ENCODE measurements at regions of chr12 and their contacts with region 1.

Region 1: DNA sequence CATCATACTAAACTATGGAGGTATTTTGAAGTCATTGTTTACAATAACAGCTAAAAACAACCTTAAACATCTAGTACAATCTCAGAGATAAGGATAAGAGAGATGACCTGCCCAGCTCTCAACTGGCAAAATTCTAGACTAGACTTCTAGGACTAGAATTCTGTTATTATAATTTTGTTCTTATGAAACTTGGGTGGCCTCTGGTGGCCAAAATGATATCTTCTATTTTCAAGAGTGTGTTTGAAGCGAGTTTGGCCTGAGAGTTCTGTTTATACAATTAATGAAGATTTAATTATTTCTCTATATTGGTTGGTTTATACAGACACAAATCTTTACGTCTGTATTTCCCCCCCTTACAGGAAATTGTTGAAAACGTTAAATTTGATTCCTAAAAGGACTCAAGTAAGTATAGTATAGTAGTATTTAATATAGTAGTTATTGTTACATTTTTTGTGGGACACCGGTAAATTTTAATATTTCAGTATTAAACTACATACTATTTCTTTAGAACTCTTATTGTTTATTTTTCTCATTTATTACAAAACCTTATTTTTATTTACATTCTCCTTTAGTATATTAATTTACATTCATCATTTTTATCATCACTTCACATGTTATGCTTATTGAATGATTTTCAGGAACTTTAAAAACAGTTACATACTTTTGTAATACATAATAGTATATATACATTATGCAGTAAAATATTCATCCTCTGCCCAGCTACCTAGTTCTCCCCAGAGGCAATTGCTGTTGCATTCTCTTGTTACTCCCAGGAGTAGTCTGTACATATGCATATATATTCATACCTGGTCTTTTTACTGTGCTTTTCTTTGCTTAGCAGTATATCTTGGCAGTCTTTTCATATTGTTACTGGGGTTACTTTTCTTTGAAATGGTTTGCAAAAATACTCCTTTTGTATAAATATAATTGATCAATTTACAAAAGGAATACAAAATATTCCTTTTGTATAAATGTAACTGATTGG is 6.6 kb downstream of the PPHLN1 start:
- DNase-seq: peak; percentile 62
- ATAC-seq: peak; percentile 45
- H3K4me3 ChIP-seq: no peak overlapping the region
- H3K4me3 Mint-ChIP-seq: no peak overlapping the region
- H3K27ac ChIP-seq: peak overlapping the region in 1 of 2 donors; percentile 6
- H3K27ac Mint-ChIP-seq: no peak overlapping the region
- H3K4me1 ChIP-seq: peaks cover 20 to 23% of the 10 kb centered on the region in 2 donors
- H3K4me1 Mint-ChIP-seq: peaks cover 57% of the 10 kb centered on the region
- H3K27me3 ChIP-seq: no peaks in the 10 kb centered on the region
- H3K27me3 Mint-ChIP-seq: no peaks in the 10 kb centered on the region
- CTCF ChIP-seq: peak; percentile 79

Region 2: GRCh38 chr12:41264281-41264680 is 1068.3 kb before region 1 on chr12:
- CTCF ChIA-PET with region 1: interaction called, 3 read pairs
- POLR2A ChIA-PET with region 1: no interaction called
- intact Hi-C with region 1: loop called (anchors 5 kb)
- DNase-seq: peak; percentile 8
- ATAC-seq: no peak
- H3K4me3 ChIP-seq: no peak overlapping the region
- H3K4me3 Mint-ChIP-seq: no peak overlapping the region
- H3K27ac ChIP-seq: no peak overlapping the region
- H3K27ac Mint-ChIP-seq: no peak overlapping the region
- H3K4me1 ChIP-seq: no peaks in the 10 kb centered on the region
- H3K4me1 Mint-ChIP-seq: no peaks in the 10 kb centered on the region
- H3K27me3 ChIP-seq: no peaks in the 10 kb centered on the region
- H3K27me3 Mint-ChIP-seq: peaks cover 3% of the 10 kb centered on the region
- CTCF ChIP-seq: peak; percentile 35

Region 3: DNA sequence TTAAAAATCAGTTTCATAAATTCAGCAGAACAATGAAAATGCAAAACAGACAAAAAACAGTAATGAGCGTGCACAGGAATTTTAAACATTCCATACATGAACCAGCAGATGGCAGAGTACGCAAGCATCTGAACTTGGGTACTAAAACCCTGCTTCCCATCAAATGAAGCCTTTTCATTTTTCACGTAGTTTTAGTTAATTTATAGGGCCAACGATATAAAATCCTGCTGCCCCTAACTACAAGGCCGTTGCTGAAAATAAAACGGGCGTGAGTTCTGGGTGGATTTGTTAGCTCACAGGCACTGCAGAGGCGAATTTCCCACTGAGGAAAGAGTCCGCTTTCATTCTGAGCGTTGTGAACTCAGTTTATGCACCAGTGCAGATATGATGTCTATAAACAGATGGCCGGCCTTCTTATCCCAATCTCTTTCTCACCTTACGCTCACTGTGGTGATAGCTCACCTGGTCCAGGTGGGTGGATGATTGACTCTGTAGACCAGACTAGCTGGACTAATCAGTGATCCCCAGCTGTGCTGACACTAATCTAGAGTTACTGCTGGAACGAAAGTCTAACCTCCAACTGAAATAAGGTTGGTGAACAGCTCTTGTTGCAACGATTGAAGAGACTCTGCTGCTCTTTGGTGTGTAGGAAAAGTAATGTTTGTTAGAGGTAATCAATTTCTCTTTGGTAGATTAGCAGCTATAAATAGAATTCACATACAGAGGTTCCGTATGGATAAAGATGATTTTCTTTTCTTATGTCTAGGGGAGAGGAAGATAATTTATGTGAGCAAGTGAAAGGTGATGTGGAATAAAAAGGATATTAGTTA is 1055.3 kb before region 1 on chr12:
- CTCF ChIA-PET with region 1: interaction called, 3 read pairs
- POLR2A ChIA-PET with region 1: no interaction called
- intact Hi-C with region 1: loop called (anchors 1 kb)
- DNase-seq: peak; percentile 44
- ATAC-seq: no peak
- H3K4me3 ChIP-seq: no peak overlapping the region
- H3K4me3 Mint-ChIP-seq: no peak overlapping the region
- H3K27ac ChIP-seq: no peak overlapping the region
- H3K27ac Mint-ChIP-seq: no peak overlapping the region
- H3K4me1 ChIP-seq: peaks cover 0 to 13% of the 10 kb centered on the region in 2 donors
- H3K4me1 Mint-ChIP-seq: no peaks in the 10 kb centered on the region
- H3K27me3 ChIP-seq: no peaks in the 10 kb centered on the region
- H3K27me3 Mint-ChIP-seq: peaks cover 9% of the 10 kb centered on the region
- CTCF ChIP-seq: peak; percentile 73

Region 4: GRCh38 chr12:41892302-41892701 is 440.3 kb before region 1 on chr12:
- CTCF ChIA-PET with region 1: no interaction called
- POLR2A ChIA-PET with region 1: no interaction called
- intact Hi-C with region 1: no loop called
- DNase-seq: no peak
- ATAC-seq: no peak
- H3K4me3 ChIP-seq: no peak overlapping the region
- H3K4me3 Mint-ChIP-seq: no peak overlapping the region
- H3K27ac ChIP-seq: no peak overlapping the region
- H3K27ac Mint-ChIP-seq: no peak overlapping the region
- H3K4me1 ChIP-seq: no peaks in the 10 kb centered on the region
- H3K4me1 Mint-ChIP-seq: no peaks in the 10 kb centered on the region
- H3K27me3 ChIP-seq: no peaks in the 10 kb centered on the region
- H3K27me3 Mint-ChIP-seq: peaks cover 7% of the 10 kb centered on the region
- CTCF ChIP-seq: no peak

Region 5: GRCh38 chr12:42129595-42130204 is 202.9 kb before region 1 on chr12:
- CTCF ChIA-PET with region 1: interaction called, 5 read pairs
- POLR2A ChIA-PET with region 1: no interaction called
- intact Hi-C with region 1: loop called (anchors 1 kb)
- DNase-seq: peak; percentile 57
- ATAC-seq: no peak
- H3K4me3 ChIP-seq: no peak overlapping the region
- H3K4me3 Mint-ChIP-seq: no peak overlapping the region
- H3K27ac ChIP-seq: no peak overlapping the region
- H3K27ac Mint-ChIP-seq: no peak overlapping the region
- H3K4me1 ChIP-seq: peaks cover 8 to 12% of the 10 kb centered on the region in 2 donors
- H3K4me1 Mint-ChIP-seq: peaks cover 33% of the 10 kb centered on the region
- H3K27me3 ChIP-seq: no peaks in the 10 kb centered on the region
- H3K27me3 Mint-ChIP-seq: no peaks in the 10 kb centered on the region
- CTCF ChIP-seq: peak; percentile 71